ENCODE measurements at regions of chr10 and their contacts with region 1.

Region 1: GRCh38 chr10:67537906-67538305 is 158.1 kb downstream of the CTNNA3 start:
- DNase-seq: no peak
- ATAC-seq: no peak
- H3K4me3 ChIP-seq: no peak overlapping the region
- H3K27ac ChIP-seq: no peak overlapping the region
- H3K4me1 ChIP-seq: peaks cover 4% of the 10 kb centered on the region; the same call in 1 of the 2 replicates
- H3K27me3 ChIP-seq: peaks cover 14% of the 10 kb centered on the region; the same call in 1 of the 2 replicates
- CTCF ChIP-seq: no peak

Region 2: GRCh38 chr10:67107670-67108069 is 430.2 kb before region 1 on chr10:
- CTCF ChIA-PET with region 1: no interaction called
- POLR2A ChIA-PET with region 1: no interaction called
- in situ Hi-C with region 1: no loop called
- intact Hi-C with region 1: no loop called
- DNase-seq: no peak
- ATAC-seq: no peak
- H3K4me3 ChIP-seq: no peak overlapping the region
- H3K27ac ChIP-seq: no peak overlapping the region
- H3K4me1 ChIP-seq: no peaks in the 10 kb centered on the region
- H3K27me3 ChIP-seq: no peaks in the 10 kb centered on the region
- CTCF ChIP-seq: no peak

Region 3: GRCh38 chr10:67697724-67698131 is 159.8 kb after region 1 on chr10:
- CTCF ChIA-PET with region 1: interaction called, 12 read pairs
- POLR2A ChIA-PET with region 1: no interaction called
- in situ Hi-C with region 1: no loop called
- intact Hi-C with region 1: no loop called
- DNase-seq: peak; percentile 35
- ATAC-seq: peak; percentile 94
- H3K4me3 ChIP-seq: no peak overlapping the region
- H3K27ac ChIP-seq: no peak overlapping the region
- H3K4me1 ChIP-seq: no peaks in the 10 kb centered on the region
- H3K27me3 ChIP-seq: peaks cover 35% of the 10 kb centered on the region
- CTCF ChIP-seq: peak; percentile 84